Pancreas (tissue), 10 donors: ENCODE measurements at regions of chr2 and their contacts with region 1.

Region 1: GRCh38 chr2:164841719-164842623 is at the start of gene COBLL1:
- DNase-seq: peak; percentile 88 to 93 (median 90)
- ATAC-seq: peak; percentile 68 to 84 (median 75)
- H3K4me3 ChIP-seq: peak within 1 kb of the TSS; percentile 68 to 90 (median 81)
- H3K27ac ChIP-seq: peak within 1 kb of the TSS; percentile 99 to 100 (median 99)
- H3K4me1 ChIP-seq: peaks cover 18 to 43% (median 21%) of the 10 kb centered on the region in 3 donors
- H3K27me3 ChIP-seq: no peaks in the 10 kb centered on the region
- CTCF ChIP-seq: peak; percentile 81 to 84 (median 82)
- total RNA-seq, gene COBLL1: 45.2 to 74.5 (median 63.0) TPM

Region 2: GRCh38 chr2:164538240-164538866 is 303.6 kb before region 1 on chr2:
- intact Hi-C with region 1: no loop called
- DNase-seq: no peak
- ATAC-seq: peak in 3 of 4 donors; percentile 77 to 82 (median 79)
- H3K4me3 ChIP-seq: no peak overlapping the region
- H3K27ac ChIP-seq: no peak overlapping the region
- H3K4me1 ChIP-seq: peaks cover 8 to 15% (median 9%) of the 10 kb centered on the region in 3 donors
- H3K27me3 ChIP-seq: no peaks in the 10 kb centered on the region
- CTCF ChIP-seq: peak in 3 of 4 donors; percentile 27 to 42 (median 28)

Region 3: DNA sequence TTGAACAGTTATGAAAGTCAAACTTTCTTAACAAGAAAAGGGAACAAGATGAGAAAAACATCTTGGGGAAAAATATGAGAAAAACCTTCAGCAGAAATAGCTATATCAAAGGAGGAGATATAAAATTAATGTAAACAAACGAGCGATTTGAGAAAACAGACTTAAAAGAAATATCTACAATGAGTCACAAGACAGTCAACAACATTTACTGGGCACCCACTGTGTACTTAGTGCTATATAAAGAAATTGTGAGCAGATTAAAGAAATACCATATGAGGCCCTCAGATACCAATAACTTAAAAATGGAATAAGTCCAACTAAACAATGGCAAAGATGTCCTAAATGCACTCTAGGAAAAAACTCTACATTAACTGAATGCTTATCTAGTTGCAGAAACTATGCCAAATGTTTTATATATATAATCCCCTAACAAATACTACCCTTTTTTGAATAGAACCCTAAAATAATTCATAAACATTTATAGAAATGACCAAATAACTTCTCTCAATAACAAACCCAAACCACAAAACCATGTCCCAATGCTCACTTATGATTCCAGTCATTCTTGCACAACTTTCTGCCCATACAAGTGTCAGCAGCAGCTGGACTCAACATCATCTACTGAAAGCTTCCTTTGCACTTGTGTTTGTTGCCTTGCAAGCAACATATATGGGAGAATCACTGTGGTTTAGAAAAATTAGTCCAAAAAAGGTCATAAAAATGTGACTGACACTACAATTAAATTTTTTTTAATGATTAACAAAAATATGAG is 83.9 kb before region 1 on chr2:
- intact Hi-C with region 1: loop called in 1 of 3 experiments (anchors 5 kb)
- DNase-seq: no peak
- ATAC-seq: peak; percentile 19 to 77 (median 64)
- H3K4me3 ChIP-seq: no peak overlapping the region
- H3K27ac ChIP-seq: peak overlapping the region in 2 of 4 donors; percentile 60 to 62
- H3K4me1 ChIP-seq: peaks cover 33 to 42% (median 34%) of the 10 kb centered on the region in 3 donors
- H3K27me3 ChIP-seq: no peaks in the 10 kb centered on the region
- CTCF ChIP-seq: no peak

Region 4: DNA sequence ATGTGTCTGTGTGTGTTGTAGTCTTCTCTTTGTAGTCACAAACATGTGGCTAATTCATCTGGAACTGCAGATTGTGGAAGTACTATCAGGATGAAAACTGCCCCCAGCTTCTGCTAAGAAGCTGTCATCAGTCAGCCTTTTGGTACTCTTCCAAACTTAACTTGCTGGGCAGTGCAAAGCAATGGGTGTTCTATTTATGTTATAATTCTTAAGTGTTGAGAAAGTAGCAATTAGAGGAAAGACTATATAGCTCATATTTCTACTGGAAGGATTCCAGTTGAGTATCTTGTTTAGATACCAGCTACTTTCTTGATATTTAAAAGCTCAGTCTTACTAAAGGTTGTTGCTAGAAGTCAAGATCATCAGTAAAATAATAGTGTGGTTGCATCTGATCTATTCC is 61.2 kb after region 1 on chr2:
- intact Hi-C with region 1: loop called in 1 of 3 experiments (anchors 10 kb)
- DNase-seq: no peak
- ATAC-seq: peak in 2 of 4 donors; percentile 41 to 53
- H3K4me3 ChIP-seq: no peak overlapping the region
- H3K27ac ChIP-seq: peak overlapping the region in 1 of 4 donors; percentile 53
- H3K4me1 ChIP-seq: peaks cover 11 to 30% (median 30%) of the 10 kb centered on the region in 3 donors
- H3K27me3 ChIP-seq: no peaks in the 10 kb centered on the region
- CTCF ChIP-seq: no peak

Region 5: GRCh38 chr2:164910101-164910899 is 68.3 kb after region 1 on chr2:
- intact Hi-C with region 1: loop called in 2 of 3 experiments (anchors 5 to 10 kb)
- DNase-seq: peak in 4 of 6 donors; percentile 37 to 82 (median 76)
- ATAC-seq: peak; percentile 68 to 83 (median 81)
- H3K4me3 ChIP-seq: peak overlapping the region in 2 of 4 donors; percentile 12 to 13
- H3K27ac ChIP-seq: peak overlapping the region; percentile 71 to 91 (median 75)
- H3K4me1 ChIP-seq: peaks cover 53 to 61% (median 54%) of the 10 kb centered on the region in 3 donors
- H3K27me3 ChIP-seq: no peaks in the 10 kb centered on the region
- CTCF ChIP-seq: no peak